SK-N-SH (cell line): ENCODE measurements at regions of chr10 and their contacts with region 1.

Region 1: DNA sequence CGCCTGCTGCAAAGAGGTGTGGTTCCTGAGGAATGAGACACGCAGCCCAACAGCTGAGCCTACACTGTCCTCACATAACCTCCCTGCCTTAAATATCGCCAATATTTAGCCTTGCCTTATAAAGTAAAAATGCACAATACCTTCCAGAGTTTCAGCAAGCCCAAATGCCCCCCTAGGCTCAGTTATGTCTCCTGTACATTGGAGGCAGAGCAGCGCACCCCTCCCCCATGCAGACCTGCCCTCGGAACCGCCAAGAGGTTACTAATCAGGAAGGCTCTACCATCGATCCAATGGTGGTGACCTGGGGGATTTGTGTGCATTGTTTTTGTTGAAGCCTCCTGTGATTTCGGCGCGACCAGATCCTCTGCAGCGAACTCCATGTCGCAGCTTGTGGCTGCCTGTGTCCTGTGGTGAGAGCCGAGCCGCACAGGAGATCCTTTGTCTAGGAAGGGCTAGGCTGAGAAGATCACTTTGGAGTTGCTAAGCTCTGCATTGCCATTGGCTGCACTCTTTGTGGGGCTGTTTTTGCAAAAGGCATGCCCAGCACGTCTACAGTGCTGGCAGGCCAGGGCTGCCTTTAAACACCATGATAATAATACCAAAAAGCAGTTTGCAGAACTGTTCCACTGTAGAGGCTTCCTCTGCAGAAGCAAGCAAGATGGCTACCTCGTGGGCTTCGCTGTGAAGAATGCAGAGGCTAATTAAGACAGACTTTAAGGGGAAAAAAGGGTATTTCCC is 40.1 kb downstream of the TET1 start:
- DNase-seq: peak; percentile 80
- H3K4me3 ChIP-seq: peak overlapping the region; percentile 48 to 66
- H3K27ac ChIP-seq: peak overlapping the region; percentile 79 to 98
- H3K4me1 ChIP-seq: peaks cover 23 to 27% of the 10 kb centered on the region in 2 experiments; a peak in 3 of 4 replicates
- H3K27me3 ChIP-seq: no peaks in the 10 kb centered on the region
- CTCF ChIP-seq: no peak
- EP300 ChIP-seq: no peak; a peak in 1 of 4 replicates
- RAD21 ChIP-seq: peak; percentile 35

Region 2: GRCh38 chr10:68501691-68502090 is 98.5 kb before region 1 on chr10:
- CTCF ChIA-PET with region 1: no interaction called
- POLR2A ChIA-PET with region 1: no interaction called
- DNase-seq: no peak
- H3K4me3 ChIP-seq: no peak overlapping the region
- H3K27ac ChIP-seq: no peak overlapping the region
- H3K4me1 ChIP-seq: no peaks in the 10 kb centered on the region
- H3K27me3 ChIP-seq: no peaks in the 10 kb centered on the region
- CTCF ChIP-seq: no peak
- EP300 ChIP-seq: no peak
- RAD21 ChIP-seq: no peak

Region 3: GRCh38 chr10:68560186-68560942 is 39.8 kb before region 1 on chr10 and contains the start of gene TET1:
- CTCF ChIA-PET with region 1: interaction called, 11 read pairs
- POLR2A ChIA-PET with region 1: interaction called, 30 read pairs
- DNase-seq: peak; percentile 91
- H3K4me3 ChIP-seq: peak within 1 kb of the TSS; percentile 84 to 85
- H3K27ac ChIP-seq: peak within 1 kb of the TSS; percentile 54 to 64; a peak in 3 of 4 replicates
- H3K4me1 ChIP-seq: peaks cover 10 to 14% of the 10 kb centered on the region in 2 experiments; a peak in 3 of 4 replicates
- H3K27me3 ChIP-seq: no peaks in the 10 kb centered on the region
- CTCF ChIP-seq: no peak
- EP300 ChIP-seq: 0 out of 4 replicates have a peak, but pooled peaks of 1 of the 2 experiments have one; percentile 29
- RAD21 ChIP-seq: no peak; the same call in 1 of the 2 replicates
- polyA plus RNA-seq, gene TET1: 0.38 and 0.44 TPM in 2 replicates